GM12878 (cell line): ENCODE measurements at regions of chr10 and their contacts with region 1.

Region 1: GRCh38 chr10:58531084-58531695 is 18.5 kb downstream of the BICC1 start:
- DNase-seq: peak; percentile 16
- ATAC-seq: peak; percentile 93
- H3K4me3 ChIP-seq: no peak overlapping the region
- H3K27ac ChIP-seq: no peak overlapping the region
- H3K4me1 ChIP-seq: no peaks in the 10 kb centered on the region
- H3K27me3 ChIP-seq: no peaks in the 10 kb centered on the region
- CTCF ChIP-seq: peak; percentile 68 to 79 (median 75)
- EP300 ChIP-seq: no peak
- POLR2A ChIP-seq: no peak
- RAD21 ChIP-seq: peak; percentile 73

Region 2: DNA sequence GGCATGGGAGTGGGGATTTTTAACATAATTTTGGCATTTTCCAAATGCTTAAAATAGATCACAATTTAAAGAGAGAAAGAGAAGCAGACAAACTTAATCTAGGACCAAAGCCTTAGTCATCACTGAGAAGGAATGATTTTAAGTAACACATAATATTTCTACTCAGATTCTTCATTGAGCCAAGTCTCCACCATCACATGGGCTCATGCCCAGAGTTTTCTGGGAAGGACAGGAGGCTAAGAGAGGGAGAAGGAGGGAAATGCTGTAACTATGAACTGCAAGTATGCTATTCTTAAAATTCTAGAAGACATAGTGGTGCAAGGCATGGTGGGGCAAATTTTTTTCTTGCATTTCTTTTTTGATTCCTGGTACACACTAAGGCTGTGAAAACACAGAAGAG is 220.2 kb before region 1 on chr10:
- CTCF ChIA-PET with region 1: interaction called, 6 read pairs
- POLR2A ChIA-PET with region 1: no interaction called
- RAD21 ChIA-PET with region 1: no interaction called
- SMC1A ChIA-PET with region 1: interaction called, 3 read pairs
- in situ Hi-C with region 1: no loop called
- intact Hi-C with region 1: loop called (anchors 5 kb)
- DNase-seq: no peak
- ATAC-seq: no peak
- H3K4me3 ChIP-seq: no peak overlapping the region
- H3K27ac ChIP-seq: no peak overlapping the region
- H3K4me1 ChIP-seq: no peaks in the 10 kb centered on the region
- H3K27me3 ChIP-seq: no peaks in the 10 kb centered on the region; a peak in 1 of 4 replicates
- CTCF ChIP-seq: no peak
- EP300 ChIP-seq: no peak
- POLR2A ChIP-seq: no peak
- RAD21 ChIP-seq: no peak

Region 3: DNA sequence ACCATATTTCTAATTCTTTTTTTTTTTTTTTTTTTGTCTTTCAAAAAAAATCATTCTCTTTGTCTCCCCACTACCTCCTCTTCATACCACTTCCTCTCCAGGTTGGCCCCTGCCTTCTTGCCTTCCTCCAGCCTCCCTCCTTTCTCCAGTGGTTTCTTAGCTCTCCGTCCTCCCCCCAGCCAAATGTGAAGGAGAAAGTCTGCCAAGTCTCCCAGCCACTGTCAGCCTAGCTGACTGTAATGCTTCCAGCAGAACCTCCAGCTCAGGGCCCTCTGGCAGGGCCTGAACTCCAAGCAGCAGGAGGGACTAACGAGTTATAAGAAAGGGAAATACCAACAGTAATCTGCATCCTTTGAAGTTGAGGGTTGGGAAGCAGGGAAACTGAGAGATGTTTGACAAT is 54.1 kb before region 1 on chr10:
- CTCF ChIA-PET with region 1: no interaction called
- POLR2A ChIA-PET with region 1: no interaction called
- RAD21 ChIA-PET with region 1: no interaction called
- SMC1A ChIA-PET with region 1: no interaction called
- in situ Hi-C with region 1: no loop called
- intact Hi-C with region 1: no loop called
- DNase-seq: no peak
- ATAC-seq: no peak
- H3K4me3 ChIP-seq: no peak overlapping the region
- H3K27ac ChIP-seq: no peak overlapping the region
- H3K4me1 ChIP-seq: no peaks in the 10 kb centered on the region
- H3K27me3 ChIP-seq: no peaks in the 10 kb centered on the region; a peak in 1 of 4 replicates
- CTCF ChIP-seq: no peak
- EP300 ChIP-seq: no peak
- POLR2A ChIP-seq: no peak
- RAD21 ChIP-seq: no peak

Region 4: GRCh38 chr10:58518775-58519174 is 12.4 kb before region 1 on chr10:
- CTCF ChIA-PET with region 1: interaction called, 7 read pairs
- POLR2A ChIA-PET with region 1: no interaction called
- RAD21 ChIA-PET with region 1: no interaction called
- SMC1A ChIA-PET with region 1: interaction called, 11 read pairs
- in situ Hi-C with region 1: no loop called
- intact Hi-C with region 1: no loop called
- DNase-seq: no peak
- ATAC-seq: no peak
- H3K4me3 ChIP-seq: no peak overlapping the region
- H3K27ac ChIP-seq: no peak overlapping the region
- H3K4me1 ChIP-seq: no peaks in the 10 kb centered on the region
- H3K27me3 ChIP-seq: peaks cover 0 to 6% of the 10 kb centered on the region in 2 experiments; a peak in 2 of 4 replicates
- CTCF ChIP-seq: no peak
- EP300 ChIP-seq: no peak
- POLR2A ChIP-seq: no peak
- RAD21 ChIP-seq: no peak

Region 5: GRCh38 chr10:58641095-58641531 is 109.9 kb after region 1 on chr10:
- CTCF ChIA-PET with region 1: interaction called, 11 read pairs
- POLR2A ChIA-PET with region 1: no interaction called
- RAD21 ChIA-PET with region 1: no interaction called
- SMC1A ChIA-PET with region 1: interaction called, 4 read pairs
- in situ Hi-C with region 1: no loop called
- intact Hi-C with region 1: loop called (anchors 2 kb)
- DNase-seq: no peak
- ATAC-seq: no peak
- H3K4me3 ChIP-seq: no peak overlapping the region
- H3K27ac ChIP-seq: no peak overlapping the region
- H3K4me1 ChIP-seq: no peaks in the 10 kb centered on the region
- H3K27me3 ChIP-seq: no peaks in the 10 kb centered on the region; a peak in 2 of 4 replicates
- CTCF ChIP-seq: peak in 2 of 3 experiments; percentile 3 to 5; a peak in 1 of 6 replicates
- EP300 ChIP-seq: no peak
- POLR2A ChIP-seq: no peak
- RAD21 ChIP-seq: no peak

Region 6: GRCh38 chr10:58775960-58776567 is 244.9 kb after region 1 on chr10:
- CTCF ChIA-PET with region 1: interaction called, 4 read pairs
- POLR2A ChIA-PET with region 1: no interaction called
- RAD21 ChIA-PET with region 1: interaction called, 3 read pairs
- SMC1A ChIA-PET with region 1: interaction called, 3 read pairs
- in situ Hi-C with region 1: no loop called
- intact Hi-C with region 1: loop called (anchors 10 kb)
- DNase-seq: no peak
- ATAC-seq: no peak
- H3K4me3 ChIP-seq: no peak overlapping the region
- H3K27ac ChIP-seq: no peak overlapping the region
- H3K4me1 ChIP-seq: no peaks in the 10 kb centered on the region
- H3K27me3 ChIP-seq: no peaks in the 10 kb centered on the region
- CTCF ChIP-seq: no peak
- EP300 ChIP-seq: no peak
- POLR2A ChIP-seq: no peak
- RAD21 ChIP-seq: no peak

Region 7: DNA sequence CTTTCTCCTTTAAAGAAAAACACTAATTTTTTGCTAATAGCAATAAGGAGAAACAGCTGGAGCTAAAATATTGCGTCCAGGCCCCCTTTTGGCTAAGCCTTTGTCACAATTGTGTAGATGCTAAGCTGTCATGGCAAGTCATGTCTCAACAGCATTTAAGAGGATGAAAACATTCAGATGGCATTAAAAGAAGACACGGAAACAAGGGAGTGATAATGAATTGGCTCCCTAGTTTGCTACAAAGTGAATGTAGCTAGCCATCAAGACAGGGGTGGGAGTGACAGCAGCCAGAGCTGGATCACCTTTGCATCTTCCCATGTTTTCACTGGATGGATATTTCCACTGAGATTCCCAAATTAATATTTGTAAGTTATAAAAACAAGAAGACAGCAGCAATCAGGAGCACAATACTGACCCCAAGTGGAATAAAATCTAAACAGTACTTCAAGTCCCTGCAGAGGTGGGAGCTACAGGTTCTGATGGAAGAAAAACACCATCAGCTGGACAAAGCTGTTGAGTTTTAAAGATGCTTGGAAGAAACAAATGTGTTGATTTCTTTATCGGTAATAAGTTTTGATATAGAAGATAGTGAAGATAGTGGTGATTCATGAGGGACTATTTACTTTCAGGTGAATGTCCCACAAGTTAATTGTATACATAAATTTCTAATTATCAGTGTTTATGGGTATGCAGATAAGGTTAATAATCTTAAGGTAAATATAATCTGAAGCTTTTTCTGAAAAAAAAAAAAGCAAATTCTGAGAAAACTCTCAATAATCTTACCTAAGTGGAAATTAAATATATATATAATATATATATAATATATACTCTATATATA is 1049.1 kb after region 1 on chr10:
- CTCF ChIA-PET with region 1: interaction called, 8 read pairs
- POLR2A ChIA-PET with region 1: no interaction called
- RAD21 ChIA-PET with region 1: interaction called, 3 read pairs
- SMC1A ChIA-PET with region 1: no interaction called
- in situ Hi-C with region 1: no loop called
- intact Hi-C with region 1: loop called (anchors 10 kb)
- DNase-seq: no peak
- ATAC-seq: no peak
- H3K4me3 ChIP-seq: no peak overlapping the region
- H3K27ac ChIP-seq: no peak overlapping the region
- H3K4me1 ChIP-seq: no peaks in the 10 kb centered on the region
- H3K27me3 ChIP-seq: no peaks in the 10 kb centered on the region
- CTCF ChIP-seq: peak; percentile 18 to 37 (median 20); a peak in 3 of 6 replicates
- EP300 ChIP-seq: no peak
- POLR2A ChIP-seq: no peak
- RAD21 ChIP-seq: peak; percentile 63